Activated naive CD8-positive, alpha-beta T cell treated with anti-CD3 and anti-CD28 coated beads, Interleukin-2, amount 10 ng/mL, durations not matched to agents 7 days and 5 days (primary cell): ENCODE measurements at regions of chr7 and their contacts with region 1.

Region 1: GRCh38 chr7:23105644-23106056 is at the start of gene KLHL7:
- DNase-seq: peak; percentile 97
- ATAC-seq: peak; percentile 97
- H3K4me3 Mint-ChIP-seq: peak within 1 kb of the TSS; percentile 97
- H3K27ac Mint-ChIP-seq: peak within 1 kb of the TSS; percentile 97
- H3K4me1 Mint-ChIP-seq: peaks cover 19% of the 10 kb centered on the region
- H3K27me3 Mint-ChIP-seq: no peaks in the 10 kb centered on the region
- total RNA-seq, gene KLHL7: 18.8 to 20.1 TPM

Region 2: DNA sequence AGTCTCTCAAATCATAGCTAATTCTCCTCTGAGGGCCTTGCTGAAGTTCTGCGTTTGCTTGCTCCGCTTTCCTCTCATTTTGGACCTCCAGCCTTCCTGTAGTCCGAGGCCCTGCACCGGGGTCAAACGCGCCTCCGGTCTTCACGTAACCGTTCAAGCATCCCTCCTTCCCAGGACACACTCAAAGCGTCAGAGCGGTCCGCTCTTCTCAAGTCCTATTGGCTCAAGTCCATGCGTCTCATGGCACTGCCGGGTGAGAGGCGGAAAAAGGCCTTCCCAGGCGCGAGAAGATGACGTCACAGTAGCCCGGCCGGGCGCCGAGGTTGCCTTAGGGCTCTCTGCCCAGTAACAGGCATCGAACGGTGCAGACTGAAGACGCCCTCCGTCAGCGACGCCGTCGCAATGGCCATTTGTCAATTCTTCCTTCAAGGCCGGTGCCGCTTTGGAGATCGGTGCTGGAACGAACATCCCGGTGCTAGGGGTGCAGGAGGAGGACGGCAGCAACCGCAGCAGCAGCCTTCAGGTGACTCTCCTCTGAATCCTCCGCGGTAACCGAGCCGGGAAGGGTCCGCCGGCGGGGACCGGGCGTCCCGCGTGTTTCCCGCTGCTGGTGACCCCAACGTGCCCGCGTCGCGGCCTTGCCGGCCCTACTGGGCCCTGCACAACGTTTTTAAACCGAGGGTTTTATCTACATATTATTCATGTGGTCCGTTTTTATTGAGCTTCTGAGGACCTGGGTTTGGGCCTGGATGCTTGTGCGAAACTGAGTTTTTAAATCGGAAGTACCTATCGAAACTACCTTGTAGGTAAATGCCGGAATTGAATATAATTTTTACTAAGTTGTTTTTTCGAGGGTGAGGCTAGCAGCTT is 76.3 kb after region 1 on chr7 and contains the start of gene NUP42:
- POLR2A ChIA-PET with region 1: interaction called, 24 read pairs
- DNase-seq: peak; percentile 93
- ATAC-seq: peak; percentile 94
- H3K4me3 Mint-ChIP-seq: peak within 1 kb of the TSS; percentile 93
- H3K27ac Mint-ChIP-seq: peak within 1 kb of the TSS; percentile 99
- H3K4me1 Mint-ChIP-seq: peaks cover 32% of the 10 kb centered on the region
- H3K27me3 Mint-ChIP-seq: peaks cover 7% of the 10 kb centered on the region
- total RNA-seq, gene NUP42: 39.2 to 43.4 TPM